Naive thymus-derived CD4-positive, alpha-beta T cell (primary cell): ENCODE measurements at regions of chr18 and their contacts with region 1.

Region 1: GRCh38 chr18:62186774-62187542 is at the starts of genes PIGN and RELCH:
- DNase-seq: peak; percentile 73 to 98 (median 96)
- ATAC-seq: peak; percentile 97
- H3K4me3 ChIP-seq: peak within 1 kb of the TSS; percentile 97
- H3K4me3 Mint-ChIP-seq: peak within 1 kb of the TSS; percentile 96 to 100 (median 99)
- H3K27ac ChIP-seq: peak within 1 kb of the TSS; percentile 74
- H3K27ac Mint-ChIP-seq: peak within 1 kb of the TSS; percentile 91 to 98 (median 96)
- H3K4me1 ChIP-seq: peaks cover 18 to 21% of the 10 kb centered on the region in 2 donors
- H3K4me1 Mint-ChIP-seq: peaks cover 48 to 76% (median 69%) of the 10 kb centered on the region in 7 donors
- H3K27me3 ChIP-seq: no peaks in the 10 kb centered on the region
- H3K27me3 Mint-ChIP-seq: no peaks in the 10 kb centered on the region
- total RNA-seq, gene PIGN: 18.2 to 29.8 (median 28.2) TPM
- total RNA-seq, gene RELCH: 51.3 to 70.8 (median 62.1) TPM

Region 2: GRCh38 chr18:61464551-61465102 is 722.3 kb before region 1 on chr18:
- CTCF ChIA-PET with region 1: no interaction called
- POLR2A ChIA-PET with region 1: no interaction called
- intact Hi-C with region 1: no loop called
- DNase-seq: no peak
- ATAC-seq: no peak
- H3K4me3 ChIP-seq: no peak overlapping the region
- H3K4me3 Mint-ChIP-seq: no peak overlapping the region
- H3K27ac ChIP-seq: no peak overlapping the region
- H3K27ac Mint-ChIP-seq: no peak overlapping the region
- H3K4me1 ChIP-seq: no peaks in the 10 kb centered on the region
- H3K4me1 Mint-ChIP-seq: no peaks in the 10 kb centered on the region
- H3K27me3 ChIP-seq: no peaks in the 10 kb centered on the region
- H3K27me3 Mint-ChIP-seq: peaks cover 0 to 8% (median 5%) of the 10 kb centered on the region in 5 donors

Region 3: DNA sequence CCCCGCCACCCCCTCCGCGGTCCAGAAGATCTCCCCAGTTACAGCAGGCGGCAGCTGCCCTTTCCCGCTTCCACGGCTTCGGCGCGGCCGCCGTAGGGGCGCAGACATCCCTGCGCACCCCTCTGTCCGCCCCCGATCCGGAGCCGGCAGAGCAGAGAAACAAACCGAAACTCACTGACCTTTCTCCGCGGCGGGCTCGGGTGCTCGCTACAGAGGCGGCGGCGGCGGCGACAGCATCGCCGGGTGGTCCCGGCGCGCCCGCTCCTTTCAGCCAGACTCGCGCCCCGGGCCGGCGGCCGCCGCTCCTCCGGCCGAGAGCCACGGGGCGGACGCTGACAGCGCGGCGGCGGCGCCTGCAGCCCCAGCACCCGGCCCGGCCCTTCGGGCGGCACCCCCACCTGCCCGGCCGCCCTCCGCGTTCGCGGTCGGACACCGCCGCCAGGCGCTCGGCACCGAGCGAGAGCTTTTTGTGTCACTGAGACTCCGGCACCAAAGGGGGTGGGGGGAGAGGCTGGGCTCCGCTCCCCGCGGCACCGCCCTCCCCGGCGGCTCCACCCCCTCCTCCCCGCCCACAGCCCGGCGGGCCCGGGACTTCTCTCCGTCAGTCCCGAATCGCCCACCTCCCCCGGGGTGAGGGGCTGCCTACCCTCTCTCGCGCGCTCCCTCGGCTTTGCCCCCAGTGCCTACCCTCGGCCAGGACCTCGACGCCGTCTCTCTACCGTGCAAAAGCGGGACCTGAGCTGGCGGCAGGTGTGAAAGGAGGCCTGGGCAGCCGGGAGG is 292.8 kb before region 1 on chr18:
- CTCF ChIA-PET with region 1: no interaction called
- POLR2A ChIA-PET with region 1: no interaction called
- intact Hi-C with region 1: loop called in 1 of 2 experiments (anchors 5 kb)
- DNase-seq: peak; percentile 30 to 73 (median 57)
- ATAC-seq: peak; percentile 93
- H3K4me3 ChIP-seq: peak overlapping the region; percentile 57
- H3K4me3 Mint-ChIP-seq: peak overlapping the region; percentile 71 to 97 (median 84)
- H3K27ac ChIP-seq: no peak overlapping the region
- H3K27ac Mint-ChIP-seq: no peak overlapping the region
- H3K4me1 ChIP-seq: peaks cover 4 to 5% of the 10 kb centered on the region in 2 donors
- H3K4me1 Mint-ChIP-seq: peaks cover 9 to 16% (median 13%) of the 10 kb centered on the region in 7 donors
- H3K27me3 ChIP-seq: peaks cover 0 to 5% of the 10 kb centered on the region in 2 donors
- H3K27me3 Mint-ChIP-seq: peaks cover 23 to 78% (median 44%) of the 10 kb centered on the region in 5 donors

Region 4: GRCh38 chr18:61992285-61992684 is 194.7 kb before region 1 on chr18:
- CTCF ChIA-PET with region 1: no interaction called
- POLR2A ChIA-PET with region 1: no interaction called
- intact Hi-C with region 1: no loop called
- DNase-seq: no peak
- ATAC-seq: no peak
- H3K4me3 ChIP-seq: no peak overlapping the region
- H3K4me3 Mint-ChIP-seq: no peak overlapping the region
- H3K27ac ChIP-seq: no peak overlapping the region
- H3K27ac Mint-ChIP-seq: no peak overlapping the region
- H3K4me1 ChIP-seq: no peaks in the 10 kb centered on the region
- H3K4me1 Mint-ChIP-seq: peaks cover 0 to 5% (median 0%) of the 10 kb centered on the region in 7 donors
- H3K27me3 ChIP-seq: no peaks in the 10 kb centered on the region
- H3K27me3 Mint-ChIP-seq: peaks cover 0 to 12% (median 7%) of the 10 kb centered on the region in 5 donors

Region 5: GRCh38 chr18:62037989-62038778 is 148.8 kb before region 1 on chr18:
- CTCF ChIA-PET with region 1: no interaction called
- POLR2A ChIA-PET with region 1: no interaction called
- intact Hi-C with region 1: no loop called
- DNase-seq: no peak
- ATAC-seq: no peak
- H3K4me3 ChIP-seq: no peak overlapping the region
- H3K4me3 Mint-ChIP-seq: no peak overlapping the region
- H3K27ac ChIP-seq: no peak overlapping the region
- H3K27ac Mint-ChIP-seq: peak overlapping the region in 1 of 9 donors; percentile 33
- H3K4me1 ChIP-seq: peaks cover 0 to 12% of the 10 kb centered on the region in 2 donors
- H3K4me1 Mint-ChIP-seq: peaks cover 3 to 21% (median 16%) of the 10 kb centered on the region in 7 donors
- H3K27me3 ChIP-seq: no peaks in the 10 kb centered on the region
- H3K27me3 Mint-ChIP-seq: no peaks in the 10 kb centered on the region

Region 6: DNA sequence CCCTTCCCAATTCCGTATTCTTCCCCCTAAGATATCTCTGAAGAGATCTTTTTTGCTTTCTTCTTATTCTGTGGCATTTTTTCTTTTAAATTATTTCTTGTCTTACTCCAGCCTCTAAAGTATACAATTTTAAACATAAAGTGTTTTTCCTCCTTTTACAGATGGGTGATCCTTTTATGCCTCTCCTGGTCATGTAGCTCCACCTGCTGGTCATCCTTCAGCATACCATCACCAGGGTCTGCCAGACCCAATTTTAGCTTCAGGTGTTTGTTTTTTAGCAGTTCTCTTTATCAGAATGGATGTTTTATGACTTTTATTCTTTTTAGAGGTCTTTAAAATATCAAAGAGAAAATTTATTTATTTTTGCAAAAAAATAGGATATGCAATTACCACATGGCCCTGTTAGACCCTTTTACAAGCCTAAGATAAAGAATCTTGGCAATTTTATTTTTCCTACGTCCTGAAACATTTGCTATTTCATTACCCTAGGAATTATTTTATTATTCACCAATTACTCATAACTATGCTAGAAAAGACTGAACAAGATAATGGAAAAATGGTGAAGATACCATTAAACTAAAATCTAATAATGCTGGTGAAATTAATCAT is 55.6 kb before region 1 on chr18:
- CTCF ChIA-PET with region 1: no interaction called
- POLR2A ChIA-PET with region 1: no interaction called
- intact Hi-C with region 1: no loop called
- DNase-seq: peak; percentile 11 to 73 (median 57)
- ATAC-seq: peak; percentile 71
- H3K4me3 ChIP-seq: no peak overlapping the region
- H3K4me3 Mint-ChIP-seq: no peak overlapping the region
- H3K27ac ChIP-seq: no peak overlapping the region
- H3K27ac Mint-ChIP-seq: no peak overlapping the region
- H3K4me1 ChIP-seq: no peaks in the 10 kb centered on the region
- H3K4me1 Mint-ChIP-seq: peaks cover 0 to 5% (median 0%) of the 10 kb centered on the region in 7 donors
- H3K27me3 ChIP-seq: no peaks in the 10 kb centered on the region
- H3K27me3 Mint-ChIP-seq: no peaks in the 10 kb centered on the region

Region 7: GRCh38 chr18:62206593-62206992 is 19.6 kb after region 1 on chr18:
- CTCF ChIA-PET with region 1: interaction called, 3 read pairs
- POLR2A ChIA-PET with region 1: interaction called, 4 read pairs
- intact Hi-C with region 1: loop called in 1 of 2 experiments (anchors 2 kb)
- DNase-seq: no peak
- ATAC-seq: no peak
- H3K4me3 ChIP-seq: no peak overlapping the region
- H3K4me3 Mint-ChIP-seq: no peak overlapping the region
- H3K27ac ChIP-seq: no peak overlapping the region
- H3K27ac Mint-ChIP-seq: no peak overlapping the region
- H3K4me1 ChIP-seq: no peaks in the 10 kb centered on the region
- H3K4me1 Mint-ChIP-seq: peaks cover 18 to 76% (median 60%) of the 10 kb centered on the region in 7 donors
- H3K27me3 ChIP-seq: no peaks in the 10 kb centered on the region
- H3K27me3 Mint-ChIP-seq: no peaks in the 10 kb centered on the region

Region 8: GRCh38 chr18:62425465-62426195 is 238.7 kb after region 1 on chr18:
- CTCF ChIA-PET with region 1: no interaction called
- POLR2A ChIA-PET with region 1: interaction called, 8 read pairs
- intact Hi-C with region 1: loop called (anchors 1 kb)
- DNase-seq: peak in 8 of 9 donors; percentile 41 to 67 (median 57)
- ATAC-seq: peak; percentile 82
- H3K4me3 ChIP-seq: no peak overlapping the region
- H3K4me3 Mint-ChIP-seq: peak overlapping the region in 1 of 10 donors; percentile 52
- H3K27ac ChIP-seq: no peak overlapping the region
- H3K27ac Mint-ChIP-seq: peak overlapping the region in 5 of 9 donors; percentile 16 to 64 (median 39)
- H3K4me1 ChIP-seq: peaks cover 0 to 6% of the 10 kb centered on the region in 2 donors
- H3K4me1 Mint-ChIP-seq: peaks cover 11 to 54% (median 18%) of the 10 kb centered on the region in 7 donors
- H3K27me3 ChIP-seq: no peaks in the 10 kb centered on the region
- H3K27me3 Mint-ChIP-seq: peaks cover 0 to 4% (median 2%) of the 10 kb centered on the region in 5 donors

Region 9: GRCh38 chr18:62584241-62585120 is 397.5 kb after region 1 on chr18:
- CTCF ChIA-PET with region 1: no interaction called
- POLR2A ChIA-PET with region 1: no interaction called
- intact Hi-C with region 1: loop called (anchors 1 kb)
- DNase-seq: peak; percentile 61 to 85 (median 82)
- ATAC-seq: peak; percentile 99
- H3K4me3 ChIP-seq: no peak overlapping the region
- H3K4me3 Mint-ChIP-seq: peak overlapping the region; percentile 18 to 65 (median 58)
- H3K27ac ChIP-seq: no peak overlapping the region
- H3K27ac Mint-ChIP-seq: peak overlapping the region; percentile 26 to 83 (median 72)
- H3K4me1 ChIP-seq: peaks cover 18 to 22% of the 10 kb centered on the region in 2 donors
- H3K4me1 Mint-ChIP-seq: peaks cover 17 to 50% (median 32%) of the 10 kb centered on the region in 7 donors
- H3K27me3 ChIP-seq: no peaks in the 10 kb centered on the region
- H3K27me3 Mint-ChIP-seq: no peaks in the 10 kb centered on the region

Region 10: GRCh38 chr18:62982600-62983251 is 795.8 kb after region 1 on chr18:
- CTCF ChIA-PET with region 1: no interaction called
- POLR2A ChIA-PET with region 1: no interaction called
- intact Hi-C with region 1: loop called (anchors 1 to 2 kb)
- DNase-seq: peak in 8 of 9 donors; percentile 29 to 60 (median 52)
- ATAC-seq: peak; percentile 70
- H3K4me3 ChIP-seq: peak overlapping the region; percentile 11
- H3K4me3 Mint-ChIP-seq: peak overlapping the region in 8 of 10 donors; percentile 33 to 78 (median 60)
- H3K27ac ChIP-seq: no peak overlapping the region
- H3K27ac Mint-ChIP-seq: peak overlapping the region in 1 of 9 donors; percentile 80
- H3K4me1 ChIP-seq: no peaks in the 10 kb centered on the region
- H3K4me1 Mint-ChIP-seq: peaks cover 0 to 7% (median 5%) of the 10 kb centered on the region in 7 donors
- H3K27me3 ChIP-seq: no peaks in the 10 kb centered on the region
- H3K27me3 Mint-ChIP-seq: peaks cover 0 to 2% (median 0%) of the 10 kb centered on the region in 5 donors

Region 11: DNA sequence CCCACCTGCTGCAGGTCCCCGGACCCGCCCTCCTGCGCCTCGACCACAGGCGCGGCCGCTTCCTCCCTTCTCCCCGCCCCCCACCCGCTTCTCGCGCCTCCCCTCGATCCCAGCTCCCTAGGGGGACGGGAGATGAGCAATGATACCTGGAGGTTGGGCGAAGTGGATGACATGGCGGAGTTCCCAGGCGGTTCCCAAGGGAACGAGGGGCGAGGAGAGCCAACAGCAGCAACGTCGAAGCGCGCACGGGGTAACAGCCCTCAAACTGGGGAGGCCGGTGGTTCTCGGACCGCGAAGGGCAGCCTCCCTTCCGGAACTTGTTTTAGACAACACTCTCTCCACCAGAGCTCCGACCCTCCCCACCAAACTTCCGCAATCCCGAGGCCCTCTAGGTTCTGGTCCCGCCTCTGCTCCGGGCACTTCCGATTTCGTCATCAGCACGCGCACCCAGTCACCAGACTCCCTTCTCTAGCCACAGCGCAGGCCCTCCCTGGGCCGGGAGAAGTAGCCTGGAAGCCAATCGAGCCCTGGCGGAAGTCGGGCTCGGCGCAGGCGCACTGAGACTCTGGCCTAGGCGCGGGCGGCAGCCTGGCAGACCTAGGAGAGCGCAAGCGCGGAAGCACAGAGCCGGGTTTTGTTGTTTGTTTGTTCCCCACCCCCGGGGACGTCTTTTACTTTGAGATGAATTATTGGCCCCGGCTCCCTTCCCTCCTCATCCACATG is 1235.3 kb after region 1 on chr18 and contains the start of gene VPS4B:
- CTCF ChIA-PET with region 1: no interaction called
- POLR2A ChIA-PET with region 1: no interaction called
- intact Hi-C with region 1: loop called (anchors 1 kb)
- DNase-seq: peak; percentile 99 to 100 (median 99)
- ATAC-seq: peak; percentile 97
- H3K4me3 ChIP-seq: peak within 1 kb of the TSS; percentile 96
- H3K4me3 Mint-ChIP-seq: peak within 1 kb of the TSS; percentile 88 to 100 (median 97)
- H3K27ac ChIP-seq: peak within 1 kb of the TSS; percentile 95
- H3K27ac Mint-ChIP-seq: peak within 1 kb of the TSS; percentile 94 to 100 (median 98)
- H3K4me1 ChIP-seq: peaks cover 17 to 22% of the 10 kb centered on the region in 2 donors
- H3K4me1 Mint-ChIP-seq: peaks cover 6 to 34% (median 26%) of the 10 kb centered on the region in 7 donors
- H3K27me3 ChIP-seq: no peaks in the 10 kb centered on the region
- H3K27me3 Mint-ChIP-seq: peaks cover 0 to 5% (median 2%) of the 10 kb centered on the region in 5 donors
- total RNA-seq, gene VPS4B: 48.2 to 84.6 (median 74.9) TPM